Cardiac septum (tissue), 1 donor: ENCODE measurements at regions of chr1 and their contacts with region 1.

Region 1: DNA sequence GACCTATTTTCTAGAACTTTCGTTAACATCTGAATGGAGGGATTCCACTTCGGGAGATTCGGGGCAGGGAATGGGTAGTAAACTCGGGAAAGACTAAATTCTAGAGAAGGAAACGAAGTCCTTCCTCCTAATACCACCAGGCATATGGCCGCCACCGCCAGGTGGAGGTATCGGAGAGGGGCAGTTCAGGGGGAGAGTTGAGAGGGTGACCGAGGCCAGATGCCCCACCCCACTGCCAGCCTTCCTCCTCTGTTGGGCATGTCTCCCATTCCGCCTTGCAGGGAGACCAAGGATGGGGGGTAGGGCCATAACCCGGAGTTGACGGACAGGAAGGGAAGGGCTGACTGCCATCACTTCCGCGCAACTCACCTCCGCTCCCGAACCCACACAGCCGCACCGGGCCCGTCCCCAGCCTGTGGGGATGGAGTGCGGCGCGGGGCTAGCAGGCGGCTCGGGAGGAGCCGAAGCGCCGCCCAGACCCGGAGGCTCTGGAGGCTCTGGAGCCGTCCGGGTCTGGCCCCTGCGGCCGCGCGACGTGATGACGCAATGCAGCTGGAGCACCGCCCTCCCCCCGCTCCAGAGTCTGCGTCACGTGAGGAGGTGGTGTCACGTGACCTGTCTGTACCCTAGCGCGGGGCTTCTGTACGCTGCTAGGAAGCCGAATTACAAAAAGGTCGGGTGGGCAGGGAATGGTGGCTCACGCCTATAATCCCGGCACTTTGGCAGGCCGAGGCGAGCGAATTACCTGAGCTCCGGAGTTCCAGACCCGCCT is at the start of gene KLHL12:
- DNase-seq: peak; percentile 98
- total RNA-seq, gene KLHL12: 23.3 TPM

Region 2: GRCh38 chr1:202888531-202889360 is 38.2 kb before region 1 on chr1 and contains the start of gene RABIF:
- intact Hi-C with region 1: loop called (anchors 5 kb)
- DNase-seq: peak; percentile 98
- total RNA-seq, gene RABIF: 5.8 TPM

Region 3: DNA sequence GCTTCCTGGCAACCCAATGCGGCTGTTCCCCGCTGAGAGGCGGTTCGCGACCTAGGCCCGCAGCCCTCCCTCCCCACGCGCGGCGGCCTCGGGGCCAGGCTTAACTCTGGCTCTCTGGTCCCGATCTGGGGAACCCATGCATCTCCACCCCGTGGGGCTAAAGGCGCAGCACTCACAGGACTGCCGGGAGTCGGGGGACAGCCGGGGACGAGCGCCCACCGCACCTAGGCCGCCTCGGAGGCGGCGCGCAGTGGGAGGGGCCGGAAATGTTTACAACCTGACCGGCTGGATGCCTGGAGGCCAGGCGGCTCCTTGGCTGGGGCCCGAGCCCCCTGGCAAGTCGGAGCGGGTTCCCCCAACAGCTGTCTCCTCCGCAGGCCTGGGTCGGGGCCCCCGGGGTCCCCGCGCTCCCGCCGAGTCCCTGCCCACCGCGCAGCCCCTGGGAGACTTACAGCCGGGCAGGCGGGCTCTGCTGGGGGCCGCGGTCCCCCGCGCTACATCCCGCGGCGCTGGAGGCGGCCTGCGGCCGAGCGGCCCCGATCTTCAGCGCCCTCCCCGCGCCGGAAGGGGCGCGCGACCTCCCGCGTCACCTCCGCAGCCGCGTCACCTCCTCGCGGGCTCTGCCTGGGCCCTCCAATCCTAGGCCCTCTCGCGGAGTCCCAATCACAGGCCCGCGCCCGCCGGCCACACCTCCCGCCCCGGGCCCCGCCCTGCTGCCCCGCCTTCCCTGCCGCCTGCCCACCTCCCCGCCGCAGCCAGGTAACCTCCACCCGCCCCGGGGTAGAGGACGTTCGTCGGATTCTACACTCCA is 31.0 kb after region 1 on chr1 and contains the start of gene ADIPOR1:
- intact Hi-C with region 1: loop called (anchors 1 kb)
- DNase-seq: peak; percentile 98
- total RNA-seq, gene ADIPOR1: 89.5 TPM

Region 4: GRCh38 chr1:202998836-202999750 is 72.2 kb after region 1 on chr1:
- intact Hi-C with region 1: loop called (anchors 2 kb)
- DNase-seq: no peak